ENCODE measurements at regions of chr2 and their contacts with region 1.

Region 1: DNA sequence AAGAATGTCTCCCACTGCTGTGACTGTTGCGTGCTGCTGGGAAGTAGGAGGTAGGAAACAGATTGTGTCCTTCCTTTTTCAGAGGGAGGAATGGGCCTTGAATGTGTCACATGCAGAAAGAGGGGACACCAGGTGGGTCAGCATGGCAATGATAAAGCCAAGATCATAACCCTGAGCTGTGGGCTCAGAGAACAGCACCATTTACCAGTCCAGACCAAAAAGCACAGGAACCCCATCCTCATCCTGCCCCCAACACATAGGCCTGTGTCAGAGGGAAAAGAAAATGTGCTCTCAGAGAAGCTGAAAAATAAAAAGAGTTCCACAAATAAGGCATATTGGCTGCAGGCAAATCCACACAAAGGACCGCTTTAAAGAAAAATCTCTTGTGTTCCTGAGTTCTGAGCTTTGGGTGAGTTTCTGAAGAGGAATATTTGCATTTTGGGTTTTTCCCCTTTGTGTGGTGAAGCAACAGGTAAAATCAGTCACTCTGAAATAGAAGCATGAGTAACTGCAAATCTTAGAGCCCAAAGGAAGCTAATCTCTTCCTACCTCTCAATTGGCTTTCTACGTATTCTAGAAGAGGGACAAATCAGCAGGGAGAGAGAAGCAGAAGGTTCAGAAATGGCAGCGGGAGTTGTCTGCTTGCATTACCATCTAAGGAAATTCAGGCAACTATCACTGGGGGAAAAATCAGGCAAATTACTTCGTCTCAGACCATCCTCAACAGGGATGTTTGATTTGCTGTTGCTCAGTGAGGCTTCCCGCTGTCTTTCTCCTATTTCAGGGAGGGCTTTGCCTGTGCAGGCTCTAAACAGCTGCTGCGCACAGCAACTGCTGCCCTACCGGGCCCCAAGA is 106.8 kb downstream of the BCL11A start:
- DNase-seq: no peak
- ATAC-seq: peak; percentile 78
- H3K4me3 Mint-ChIP-seq: peak overlapping the region; percentile 78
- H3K27ac Mint-ChIP-seq: peak overlapping the region; percentile 98
- H3K4me1 Mint-ChIP-seq: peaks cover 90% of the 10 kb centered on the region
- H3K27me3 Mint-ChIP-seq: no peaks in the 10 kb centered on the region
- CTCF ChIP-seq: no peak

Region 2: DNA sequence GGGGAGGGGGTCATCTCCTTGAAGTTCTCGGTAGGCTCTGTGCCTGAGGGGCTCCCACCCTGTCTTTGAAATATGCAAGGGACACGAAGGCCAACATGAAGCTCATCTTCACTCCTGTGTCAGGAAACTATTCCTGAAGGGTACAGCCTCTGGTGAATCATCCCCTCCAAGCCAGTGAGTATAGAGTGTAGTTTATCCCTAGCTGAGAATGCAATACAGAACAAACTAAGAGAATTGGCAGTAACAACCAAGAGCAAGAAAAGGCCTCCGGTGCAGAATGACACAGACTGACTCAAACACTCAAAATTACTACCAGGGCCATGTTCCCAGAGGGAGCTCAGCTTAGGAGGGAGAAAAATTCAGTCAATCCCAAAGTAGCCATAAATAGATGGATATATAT is 306.5 kb before region 1 on chr2:
- CTCF ChIA-PET with region 1: no interaction called
- POLR2A ChIA-PET with region 1: no interaction called
- intact Hi-C with region 1: no loop called
- DNase-seq: no peak
- ATAC-seq: no peak
- H3K4me3 Mint-ChIP-seq: no peak overlapping the region
- H3K27ac Mint-ChIP-seq: no peak overlapping the region
- H3K4me1 Mint-ChIP-seq: no peaks in the 10 kb centered on the region
- H3K27me3 Mint-ChIP-seq: no peaks in the 10 kb centered on the region
- CTCF ChIP-seq: no peak

Region 3: GRCh38 chr2:60366135-60366712 is 80.4 kb before region 1 on chr2:
- CTCF ChIA-PET with region 1: no interaction called
- POLR2A ChIA-PET with region 1: interaction called, 13 read pairs
- intact Hi-C with region 1: no loop called
- DNase-seq: no peak
- ATAC-seq: peak; percentile 60
- H3K4me3 Mint-ChIP-seq: peak overlapping the region; percentile 62
- H3K27ac Mint-ChIP-seq: peak overlapping the region; percentile 95
- H3K4me1 Mint-ChIP-seq: peaks cover 99% of the 10 kb centered on the region
- H3K27me3 Mint-ChIP-seq: no peaks in the 10 kb centered on the region
- CTCF ChIP-seq: no peak

Region 4: DNA sequence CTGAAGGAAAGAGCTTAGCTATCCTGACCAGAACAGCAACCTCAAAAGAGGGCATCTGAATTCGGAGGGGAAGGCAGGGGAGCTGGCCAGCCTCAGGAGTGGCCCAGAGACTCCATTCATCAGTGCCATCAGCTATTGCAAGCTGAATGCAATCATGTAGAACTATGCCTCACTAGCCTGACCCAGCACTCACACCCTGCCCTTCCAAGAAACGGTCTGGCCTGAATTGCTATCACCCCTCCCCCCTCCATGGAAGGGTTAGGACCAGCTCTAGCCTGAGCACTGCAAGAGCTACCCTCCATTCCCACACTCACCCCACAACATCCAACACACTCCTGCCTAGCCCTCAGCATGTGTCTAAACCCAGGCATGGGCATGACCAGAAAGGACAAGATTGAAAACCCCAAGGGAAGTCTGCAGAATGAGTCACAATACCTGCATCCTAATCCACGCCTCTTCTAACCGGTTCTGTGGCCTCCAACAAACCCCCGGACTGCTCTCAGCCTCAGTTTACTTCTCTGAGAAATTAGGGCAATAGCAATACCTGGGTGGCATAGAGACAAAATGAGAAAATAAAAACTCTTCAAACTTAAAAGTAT is 13.5 kb before region 1 on chr2:
- CTCF ChIA-PET with region 1: interaction called, 3 read pairs
- POLR2A ChIA-PET with region 1: interaction called, 17 read pairs
- intact Hi-C with region 1: no loop called
- DNase-seq: no peak
- ATAC-seq: peak; percentile 71
- H3K4me3 Mint-ChIP-seq: no peak overlapping the region
- H3K27ac Mint-ChIP-seq: peak overlapping the region; percentile 21
- H3K4me1 Mint-ChIP-seq: peaks cover 51% of the 10 kb centered on the region
- H3K27me3 Mint-ChIP-seq: no peaks in the 10 kb centered on the region
- CTCF ChIP-seq: no peak

Region 5: DNA sequence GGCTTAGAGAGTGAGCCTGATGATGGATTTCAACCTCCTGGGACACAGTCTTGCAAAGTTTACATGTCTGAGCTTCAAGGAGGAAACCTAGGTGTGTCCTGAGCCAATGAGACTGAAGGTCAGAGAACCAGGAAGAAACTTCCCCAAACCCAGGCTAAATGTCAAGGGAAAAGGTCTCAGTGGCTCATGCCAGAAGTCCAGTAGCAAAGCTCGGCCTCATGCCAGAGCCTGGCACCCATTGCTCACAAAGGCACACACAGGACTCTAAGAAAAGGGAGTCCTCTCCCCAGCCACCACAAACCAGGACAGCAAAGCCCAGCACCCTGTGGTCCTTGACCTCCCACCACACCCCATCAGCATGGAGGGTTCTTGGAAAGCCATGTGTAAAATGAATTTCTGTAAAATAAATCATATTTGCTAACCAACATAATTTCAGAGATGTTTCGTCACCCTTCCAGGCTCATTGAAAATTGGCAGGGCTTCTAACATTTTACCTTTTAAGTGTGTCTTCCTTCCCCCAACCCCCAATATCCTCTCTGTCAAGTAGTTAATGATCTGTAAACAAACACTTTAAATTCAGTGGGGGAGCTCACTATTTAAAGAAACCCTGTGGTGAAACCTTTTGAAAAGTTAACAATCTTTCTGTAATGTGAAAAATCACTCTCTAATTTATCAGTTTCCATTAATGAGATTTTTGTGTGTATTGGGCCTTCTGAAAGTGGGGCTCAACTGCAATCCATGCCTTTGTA is 29.7 kb after region 1 on chr2:
- CTCF ChIA-PET with region 1: no interaction called
- POLR2A ChIA-PET with region 1: interaction called, 12 read pairs
- intact Hi-C with region 1: no loop called
- DNase-seq: no peak
- ATAC-seq: no peak
- H3K4me3 Mint-ChIP-seq: peak overlapping the region; percentile 39
- H3K27ac Mint-ChIP-seq: peak overlapping the region; percentile 84
- H3K4me1 Mint-ChIP-seq: peaks cover 100% of the 10 kb centered on the region
- H3K27me3 Mint-ChIP-seq: no peaks in the 10 kb centered on the region
- CTCF ChIP-seq: no peak

Region 6: GRCh38 chr2:60492548-60492947 is 45.9 kb after region 1 on chr2:
- CTCF ChIA-PET with region 1: interaction called, 3 read pairs
- POLR2A ChIA-PET with region 1: interaction called, 15 read pairs
- intact Hi-C with region 1: no loop called
- DNase-seq: no peak
- ATAC-seq: peak; percentile 83
- H3K4me3 Mint-ChIP-seq: peak overlapping the region; percentile 62
- H3K27ac Mint-ChIP-seq: peak overlapping the region; percentile 78
- H3K4me1 Mint-ChIP-seq: peaks cover 97% of the 10 kb centered on the region
- H3K27me3 Mint-ChIP-seq: no peaks in the 10 kb centered on the region
- CTCF ChIP-seq: no peak

Region 7: GRCh38 chr2:60515721-60516226 is 69.1 kb after region 1 on chr2:
- CTCF ChIA-PET with region 1: no interaction called
- POLR2A ChIA-PET with region 1: interaction called, 16 read pairs
- intact Hi-C with region 1: no loop called
- DNase-seq: peak; percentile 57
- ATAC-seq: peak; percentile 76
- H3K4me3 Mint-ChIP-seq: peak overlapping the region; percentile 68
- H3K27ac Mint-ChIP-seq: peak overlapping the region; percentile 91
- H3K4me1 Mint-ChIP-seq: peaks cover 97% of the 10 kb centered on the region
- H3K27me3 Mint-ChIP-seq: no peaks in the 10 kb centered on the region
- CTCF ChIP-seq: no peak